Heart left ventricle (tissue), 16 donors: ENCODE measurements at regions of chr1 and their contacts with region 1.

Region 1: GRCh38 chr1:154911691-154912550 is 24.6 kb downstream of the PMVK start:
- DNase-seq: peak in 2 of 5 donors; percentile 39 to 66
- ATAC-seq: peak; percentile 75 to 85 (median 80)
- H3K4me3 ChIP-seq: no peak overlapping the region
- H3K27ac ChIP-seq: peak overlapping the region in 10 of 12 donors; percentile 7 to 74 (median 42)
- H3K4me1 ChIP-seq: peaks cover 0 to 20% (median 4%) of the 10 kb centered on the region in 12 donors
- H3K27me3 ChIP-seq: no peaks in the 10 kb centered on the region
- CTCF ChIP-seq: no peak
- POLR2A ChIP-seq: no peak

Region 2: GRCh38 chr1:154936555-154937084 is 24.7 kb after region 1 on chr1 and contains the start of gene PMVK:
- intact Hi-C with region 1: loop called in 1 of 10 experiments (anchors 2 kb)
- DNase-seq: peak; percentile 96 to 97 (median 97)
- ATAC-seq: peak; percentile 93 to 96 (median 94)
- H3K4me3 ChIP-seq: peak within 1 kb of the TSS; percentile 39 to 80 (median 66)
- H3K27ac ChIP-seq: peak within 1 kb of the TSS; percentile 90 to 100 (median 98)
- H3K4me1 ChIP-seq: peaks cover 0 to 43% (median 18%) of the 10 kb centered on the region in 12 donors
- H3K27me3 ChIP-seq: no peaks in the 10 kb centered on the region
- CTCF ChIP-seq: peak in 10 of 12 donors; percentile 17 to 55 (median 37)
- POLR2A ChIP-seq: peak in 1 of 2 donors; percentile 46
- total RNA-seq, gene PMVK: 12.8 to 50.8 (median 37.5) TPM